Right cardiac atrium (tissue), 5 donors: ENCODE measurements at regions of chr5 and their contacts with region 1.

Region 1: DNA sequence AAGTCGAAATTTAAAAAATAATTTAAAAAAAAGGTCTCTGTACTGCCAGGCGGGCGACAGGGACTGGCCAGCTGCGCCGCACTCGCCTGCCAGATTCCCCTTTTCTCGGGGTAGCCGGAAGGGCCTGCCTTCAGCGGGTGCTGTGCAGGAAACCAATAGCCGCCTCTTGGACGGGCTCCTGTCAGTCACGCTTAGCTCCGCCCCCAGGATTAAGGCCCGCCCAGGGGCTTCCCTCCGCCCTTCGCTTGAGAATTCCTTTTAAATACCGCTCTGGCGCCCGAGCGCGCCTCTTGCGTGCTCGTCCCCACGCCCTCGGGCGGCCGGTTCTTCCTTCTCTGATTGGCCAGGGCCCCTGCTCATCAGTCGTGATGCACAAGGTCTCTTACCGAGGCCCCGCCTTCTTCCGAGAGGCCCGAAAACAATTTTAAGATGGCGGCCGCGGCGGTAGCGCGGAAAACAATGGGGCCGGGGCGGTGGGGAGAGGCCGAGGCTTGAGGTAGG is at the start of gene MAML1:
- DNase-seq: peak; percentile 100
- ATAC-seq: peak; percentile 99
- H3K4me3 ChIP-seq: peak within 1 kb of the TSS; percentile 92
- H3K27ac ChIP-seq: peak within 1 kb of the TSS; percentile 90
- H3K4me1 ChIP-seq: peaks cover 3% of the 10 kb centered on the region
- H3K27me3 ChIP-seq: no peaks in the 10 kb centered on the region
- total RNA-seq, gene MAML1: 13.4 to 15.6 (median 14.6) TPM

Region 2: DNA sequence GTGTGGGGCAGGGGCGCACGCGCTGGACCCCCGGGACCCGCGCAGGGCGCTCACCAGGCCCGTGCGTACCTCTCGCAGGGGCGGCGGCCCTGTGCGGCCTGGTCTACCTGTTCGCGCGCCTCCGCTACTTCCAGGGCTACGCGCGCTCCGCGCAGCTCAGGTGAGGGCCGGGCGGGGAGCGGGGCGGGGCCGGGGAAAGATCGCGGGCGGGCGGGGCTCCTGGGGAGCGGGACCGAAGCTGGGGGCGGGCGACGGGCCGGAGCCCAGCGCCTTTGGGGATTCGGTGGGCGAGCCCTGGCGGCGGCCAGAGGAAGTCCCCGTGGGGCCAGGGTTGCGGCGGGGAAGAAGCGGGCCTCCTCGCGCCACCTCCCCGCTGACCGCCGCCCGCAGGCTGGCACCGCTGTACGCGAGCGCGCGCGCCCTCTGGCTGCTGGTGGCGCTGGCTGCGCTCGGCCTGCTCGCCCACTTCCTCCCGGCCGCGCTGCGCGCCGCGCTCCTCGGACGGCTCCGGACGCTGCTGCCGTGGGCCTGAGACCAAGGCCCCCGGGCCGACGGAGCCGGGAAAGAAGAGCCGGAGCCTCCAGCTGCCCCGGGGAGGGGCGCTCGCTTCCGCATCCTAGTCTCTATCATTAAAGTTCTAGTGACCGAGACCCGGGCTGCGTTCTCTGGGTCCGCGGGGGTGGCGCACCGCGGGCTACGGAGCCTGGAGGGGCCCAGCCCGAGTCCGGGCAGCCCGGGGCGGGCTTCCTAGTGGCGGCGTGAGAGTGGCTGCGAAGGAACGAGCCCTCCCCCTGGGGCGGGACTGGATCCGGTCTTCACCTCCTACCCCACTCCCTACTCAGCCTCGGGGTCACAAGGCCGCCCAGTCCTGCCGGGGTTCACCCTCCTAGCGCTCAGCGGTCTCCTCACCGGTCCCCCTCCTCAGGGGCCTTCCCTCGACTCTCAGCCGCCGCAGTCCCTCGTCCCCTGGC is 63.7 kb after region 1 on chr5:
- intact Hi-C with region 1: loop called in 1 of 4 experiments (anchors 2 kb)
- DNase-seq: peak; percentile 87 to 94 (median 93)
- ATAC-seq: peak; percentile 62 to 68
- H3K4me3 ChIP-seq: peak overlapping the region; percentile 57
- H3K27ac ChIP-seq: peak overlapping the region; percentile 10
- H3K4me1 ChIP-seq: peaks cover 16% of the 10 kb centered on the region
- H3K27me3 ChIP-seq: no peaks in the 10 kb centered on the region

Region 3: DNA sequence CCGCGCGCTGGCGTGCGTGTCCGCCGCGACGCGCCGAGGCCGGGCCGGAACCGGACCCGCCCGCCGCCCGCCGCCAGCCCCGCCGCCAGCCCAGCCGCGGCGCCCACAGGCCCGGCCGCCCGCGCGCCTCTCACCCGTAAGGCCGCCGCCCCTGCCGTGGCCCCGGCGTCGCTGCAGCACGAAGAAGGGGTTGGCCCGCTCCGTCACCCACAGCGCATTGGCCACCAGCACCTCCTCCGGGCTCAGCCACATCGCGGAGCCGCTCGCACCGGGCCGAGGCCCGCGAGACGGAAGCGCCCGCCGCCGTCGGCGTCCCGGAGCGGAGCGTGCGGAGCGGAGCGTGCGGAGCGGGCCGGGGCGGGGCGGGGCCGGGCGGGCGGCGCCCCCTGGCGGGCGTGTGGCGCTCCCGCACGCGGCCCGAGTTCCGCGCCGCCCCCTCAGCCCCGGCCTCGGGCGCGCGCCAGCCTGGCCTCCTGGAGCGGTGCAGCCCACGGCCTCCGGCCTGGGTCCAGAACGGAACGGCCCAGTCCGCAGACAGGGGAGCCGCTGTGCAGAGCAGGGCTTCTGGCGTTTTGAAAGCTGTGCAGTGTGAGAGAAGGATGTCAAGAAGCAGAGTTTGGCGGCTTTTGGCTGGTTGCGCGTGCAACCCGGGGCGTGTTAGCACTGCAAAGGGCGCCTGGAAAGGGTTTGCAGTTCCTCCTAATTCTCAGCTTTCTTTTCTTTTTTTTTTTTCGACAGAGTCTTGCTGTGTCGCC is 175.3 kb after region 1 on chr5 and contains the start of gene TBC1D9B:
- intact Hi-C with region 1: loop called in 1 of 4 experiments (anchors 10 kb)
- DNase-seq: peak; percentile 77 to 93 (median 91)
- ATAC-seq: peak; percentile 88 to 91
- H3K4me3 ChIP-seq: peak within 1 kb of the TSS; percentile 95
- H3K27ac ChIP-seq: peak within 1 kb of the TSS; percentile 90
- H3K4me1 ChIP-seq: peaks cover 4% of the 10 kb centered on the region
- H3K27me3 ChIP-seq: no peaks in the 10 kb centered on the region
- total RNA-seq, gene TBC1D9B: 36.2 to 51.5 (median 45.2) TPM

Region 4: GRCh38 chr5:179954434-179954833 is 222.0 kb after region 1 on chr5:
- intact Hi-C with region 1: no loop called
- DNase-seq: no peak
- ATAC-seq: no peak
- H3K4me3 ChIP-seq: no peak overlapping the region
- H3K27ac ChIP-seq: no peak overlapping the region
- H3K4me1 ChIP-seq: no peaks in the 10 kb centered on the region
- H3K27me3 ChIP-seq: no peaks in the 10 kb centered on the region

Region 5: DNA sequence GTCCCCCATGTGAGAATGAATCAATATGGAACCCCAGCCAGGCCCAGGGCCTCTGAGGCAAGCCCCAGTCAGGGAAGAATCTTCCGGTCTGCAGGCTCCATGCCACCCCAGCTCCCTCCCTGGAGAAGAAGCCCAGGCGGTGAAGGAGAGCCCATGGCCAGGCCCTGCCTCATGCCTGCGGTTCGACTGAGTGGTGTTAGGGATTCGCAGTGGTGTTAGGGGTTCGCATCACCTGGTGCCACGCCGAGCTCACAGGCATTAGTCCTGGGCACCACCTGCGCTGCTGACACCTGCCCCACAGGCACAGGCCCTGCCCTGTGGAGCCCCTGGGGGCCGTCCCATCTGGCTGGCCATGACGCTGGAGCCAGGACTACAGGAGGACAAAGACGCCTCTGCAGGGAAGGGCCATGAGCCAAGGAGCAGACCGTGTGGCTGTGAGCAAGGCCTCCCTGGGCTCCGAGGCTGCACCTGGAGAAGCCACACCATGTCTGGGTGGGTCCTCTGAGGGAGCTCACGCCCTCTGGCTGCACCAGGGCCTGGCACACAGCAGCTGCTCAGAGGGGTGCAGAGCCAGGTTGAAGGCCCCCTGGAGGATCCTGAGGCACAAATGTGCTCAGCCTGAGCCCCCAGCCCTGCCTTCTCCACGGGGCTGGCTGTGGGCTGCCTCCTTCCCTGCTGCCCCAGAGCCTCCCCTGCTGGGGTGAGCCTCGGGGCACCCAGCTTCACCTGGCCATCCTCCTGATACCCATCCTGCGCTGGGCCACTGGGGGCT is 366.7 kb after region 1 on chr5:
- intact Hi-C with region 1: no loop called
- DNase-seq: no peak
- ATAC-seq: no peak
- H3K4me3 ChIP-seq: no peak overlapping the region
- H3K27ac ChIP-seq: no peak overlapping the region
- H3K4me1 ChIP-seq: no peaks in the 10 kb centered on the region
- H3K27me3 ChIP-seq: no peaks in the 10 kb centered on the region